H1 (cell line): ENCODE measurements at regions of chr6 and their contacts with region 1.

Region 1: DNA sequence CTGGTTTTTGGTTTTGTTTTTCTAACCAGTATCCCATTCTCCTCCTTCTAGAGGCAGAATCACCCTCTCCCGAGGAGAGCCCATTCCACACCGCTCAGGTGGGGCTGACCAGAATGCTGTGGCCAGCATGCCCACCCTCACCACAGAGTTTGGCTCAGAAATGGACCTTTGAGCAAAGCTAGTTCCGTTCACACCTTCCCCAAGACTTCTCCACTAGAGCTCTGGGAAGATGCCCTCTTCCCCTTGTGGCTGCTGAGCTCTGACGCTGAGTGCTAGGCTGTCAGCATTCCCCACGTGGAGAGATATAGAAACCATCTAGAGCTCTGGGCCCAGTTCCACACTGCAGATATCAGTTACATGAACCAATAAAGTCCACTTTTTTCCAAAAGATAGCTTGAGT is 7.9 kb downstream of the GPLD1 start:
- DNase-seq: no peak
- H3K4me3 ChIP-seq: no peak overlapping the region
- H3K27ac ChIP-seq: no peak overlapping the region
- H3K4me1 ChIP-seq: no peaks in the 10 kb centered on the region
- H3K27me3 ChIP-seq: no peaks in the 10 kb centered on the region
- CTCF ChIP-seq: no peak
- EP300 ChIP-seq: no peak
- POLR2A ChIP-seq: no peak
- RAD21 ChIP-seq: no peak

Region 2: GRCh38 chr6:23823421-23823820 is 658.0 kb before region 1 on chr6:
- CTCF ChIA-PET with region 1: no interaction called
- POLR2A ChIA-PET with region 1: no interaction called
- DNase-seq: no peak
- H3K4me3 ChIP-seq: no peak overlapping the region
- H3K27ac ChIP-seq: no peak overlapping the region
- H3K4me1 ChIP-seq: no peaks in the 10 kb centered on the region
- H3K27me3 ChIP-seq: no peaks in the 10 kb centered on the region
- CTCF ChIP-seq: no peak
- EP300 ChIP-seq: no peak
- POLR2A ChIP-seq: no peak
- RAD21 ChIP-seq: no peak

Region 3: DNA sequence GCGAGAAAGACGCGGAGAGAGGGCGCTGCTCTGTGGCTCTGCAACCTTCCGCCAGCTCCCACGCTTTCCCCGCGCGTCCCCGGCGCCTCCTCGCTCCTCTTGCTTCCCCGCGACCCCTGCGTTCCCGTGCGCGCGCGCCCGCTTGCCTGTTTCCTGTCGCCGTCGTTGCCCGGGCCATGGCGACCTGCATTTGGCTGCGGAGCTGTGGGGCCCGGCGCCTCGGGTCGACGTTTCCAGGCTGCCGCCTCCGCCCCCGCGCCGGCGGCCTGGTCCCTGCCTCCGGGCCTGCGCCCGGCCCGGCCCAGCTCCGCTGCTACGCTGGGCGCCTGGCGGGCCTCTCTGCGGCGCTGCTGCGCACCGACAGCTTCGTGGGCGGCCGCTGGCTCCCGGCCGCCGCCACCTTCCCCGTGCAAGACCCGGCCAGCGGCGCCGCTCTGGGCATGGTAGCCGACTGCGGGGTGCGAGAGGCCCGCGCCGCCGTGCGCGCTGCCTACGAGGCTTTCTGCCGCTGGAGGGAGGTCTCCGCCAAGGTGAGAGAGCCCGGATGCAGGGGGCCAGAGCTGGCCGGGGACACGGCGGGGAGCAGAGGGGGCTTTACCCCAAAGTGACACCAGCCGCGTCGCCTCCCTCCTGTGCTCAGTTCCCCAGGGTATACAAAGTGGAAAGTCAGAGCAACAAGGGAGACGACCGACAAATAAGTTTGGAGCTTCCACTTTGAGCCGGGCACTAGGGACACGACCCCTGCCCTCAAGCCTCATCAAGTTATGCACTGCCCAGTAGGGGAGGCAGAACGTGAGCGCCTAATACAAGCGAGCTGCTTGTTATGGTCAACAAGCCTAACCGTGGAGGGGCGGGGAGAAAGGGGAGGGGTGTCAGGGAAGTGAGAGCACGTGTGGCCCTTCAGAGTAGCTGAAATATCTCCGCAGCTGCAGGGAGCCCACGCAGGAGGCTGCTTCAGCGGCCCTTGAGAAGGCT is 13.7 kb after region 1 on chr6 and contains the start of gene ALDH5A1:
- CTCF ChIA-PET with region 1: interaction called, 12 read pairs
- POLR2A ChIA-PET with region 1: interaction called, 4 read pairs
- DNase-seq: peak; percentile 39 to 84
- H3K4me3 ChIP-seq: peak within 1 kb of the TSS; percentile 48 to 72 (median 66)
- H3K27ac ChIP-seq: no peak within 1 kb of the TSS
- H3K4me1 ChIP-seq: peaks cover 0 to 7% (median 3%) of the 10 kb centered on the region in 4 experiments; a peak in 4 of 7 replicates
- H3K27me3 ChIP-seq: peaks cover 0 to 24% (median 8%) of the 10 kb centered on the region in 4 experiments; a peak in 6 of 7 replicates
- CTCF ChIP-seq: peak; percentile 35 to 40 (median 36)
- EP300 ChIP-seq: no peak
- POLR2A ChIP-seq: peak in 1 of 2 experiments; percentile 12; a peak in 1 of 3 replicates
- RAD21 ChIP-seq: peak; percentile 50 to 65
- total RNA-seq, gene ALDH5A1: 2.4 and 4.1 TPM in 2 replicates